Vagina (tissue), 2 donors: ENCODE measurements at regions of chr1 and their contacts with region 1.

Region 1: GRCh38 chr1:204806943-204807687 is 63.5 kb upstream of the NFASC start:
- DNase-seq: no peak
- H3K4me3 ChIP-seq: peak overlapping the region; percentile 26 to 43
- H3K27ac ChIP-seq: no peak overlapping the region
- H3K4me1 ChIP-seq: no peaks in the 10 kb centered on the region
- H3K27me3 ChIP-seq: no peaks in the 10 kb centered on the region
- CTCF ChIP-seq: peak; percentile 87 to 97 (median 95)
- POLR2A ChIP-seq: no peak

Region 2: DNA sequence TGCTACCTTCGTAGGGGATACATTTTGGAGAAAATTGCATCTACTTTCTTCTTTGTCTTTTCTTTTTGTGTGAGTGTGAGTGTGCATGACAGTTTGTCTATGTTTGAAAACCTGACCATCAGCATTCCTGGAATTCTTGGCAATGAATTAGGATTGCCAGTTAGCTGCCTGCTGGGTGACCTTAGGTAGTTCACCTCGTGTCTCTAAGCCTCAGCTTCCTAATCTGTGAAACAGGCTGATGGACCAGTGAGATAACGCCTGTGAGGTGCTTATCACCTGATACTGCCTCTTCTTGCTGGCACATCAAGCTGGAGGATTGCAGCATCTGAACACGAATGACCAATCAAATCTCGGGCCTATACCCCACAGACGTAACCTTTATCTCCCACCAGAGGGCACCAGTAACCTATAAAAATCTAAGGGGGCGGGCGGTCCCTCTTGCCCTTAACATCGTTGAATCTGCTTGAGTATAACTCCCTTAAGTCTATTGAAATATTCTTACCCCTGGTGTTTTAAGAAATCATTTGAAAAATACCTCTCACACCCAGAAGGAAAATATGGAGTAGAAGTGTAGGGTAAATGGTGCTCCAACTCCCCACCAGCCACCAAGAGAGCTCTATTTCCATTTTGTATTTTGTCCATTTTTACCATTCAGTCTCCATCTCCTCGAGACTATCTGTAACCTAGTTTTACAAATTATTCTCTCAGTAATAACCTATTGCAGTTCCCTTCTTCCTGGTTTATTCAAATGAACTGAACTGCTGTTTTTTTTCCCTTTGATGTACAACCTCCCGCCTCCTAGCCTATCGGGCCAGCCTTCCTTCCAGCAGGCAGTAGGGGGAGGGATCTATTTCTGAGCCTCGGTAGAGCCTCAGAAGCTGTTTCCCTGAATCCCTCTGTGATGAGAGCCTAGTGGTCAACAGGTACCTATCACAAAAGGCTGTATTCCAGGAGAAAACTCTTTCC is 241.2 kb before region 1 on chr1:
- intact Hi-C with region 1: loop called (anchors 2 kb)
- DNase-seq: no peak
- H3K4me3 ChIP-seq: no peak overlapping the region
- H3K27ac ChIP-seq: no peak overlapping the region
- H3K4me1 ChIP-seq: no peaks in the 10 kb centered on the region
- H3K27me3 ChIP-seq: no peaks in the 10 kb centered on the region
- CTCF ChIP-seq: peak; percentile 61 to 79 (median 65)
- POLR2A ChIP-seq: no peak

Region 3: DNA sequence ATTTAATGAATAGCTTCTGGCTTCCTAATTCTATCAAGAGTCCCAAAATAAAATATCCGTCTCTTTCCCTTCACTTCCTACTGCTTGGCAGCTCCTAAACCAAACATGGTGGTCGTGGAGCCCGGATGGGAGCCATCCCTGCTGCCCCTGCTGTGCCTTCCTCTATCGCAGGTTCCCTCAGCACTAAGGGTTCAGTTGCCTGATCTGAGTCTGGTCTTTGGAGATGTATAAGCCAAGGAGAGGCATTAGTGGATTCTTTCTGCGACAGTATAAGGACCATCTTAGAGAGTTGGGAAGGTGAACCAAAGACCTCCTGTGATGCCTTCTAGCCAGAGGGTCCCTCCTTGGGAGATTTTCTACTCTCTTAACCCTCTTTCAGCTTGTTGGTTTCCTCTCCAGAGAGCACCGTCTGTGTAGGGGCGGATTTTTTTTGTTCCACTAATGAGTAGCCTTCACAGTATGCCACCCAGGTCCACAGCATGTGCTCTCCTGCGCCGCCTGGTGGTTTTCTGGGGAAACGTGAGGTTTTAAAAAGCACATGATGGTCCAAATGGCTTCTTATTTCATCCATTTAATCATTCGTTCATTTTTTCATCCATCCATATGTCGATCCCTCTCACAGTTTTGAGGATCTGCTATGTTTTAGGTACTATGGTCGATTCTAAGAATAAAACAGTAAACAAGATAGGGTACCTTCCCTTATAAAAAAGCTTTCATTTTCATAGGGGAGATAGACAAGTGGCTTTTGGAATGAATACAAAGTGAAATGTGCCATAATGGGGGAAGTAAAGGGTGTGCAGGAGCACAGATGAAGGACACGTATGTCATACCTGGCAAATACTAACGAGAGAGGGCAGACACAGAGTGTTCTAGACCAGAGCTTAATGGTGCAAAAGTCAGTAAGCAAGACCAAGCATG is 134.6 kb after region 1 on chr1:
- intact Hi-C with region 1: loop called (anchors 5 kb)
- DNase-seq: no peak
- H3K4me3 ChIP-seq: no peak overlapping the region
- H3K27ac ChIP-seq: peak overlapping the region; percentile 2
- H3K4me1 ChIP-seq: no peaks in the 10 kb centered on the region
- H3K27me3 ChIP-seq: no peaks in the 10 kb centered on the region
- CTCF ChIP-seq: peak; percentile 71 to 89 (median 84)
- POLR2A ChIP-seq: no peak

Region 4: DNA sequence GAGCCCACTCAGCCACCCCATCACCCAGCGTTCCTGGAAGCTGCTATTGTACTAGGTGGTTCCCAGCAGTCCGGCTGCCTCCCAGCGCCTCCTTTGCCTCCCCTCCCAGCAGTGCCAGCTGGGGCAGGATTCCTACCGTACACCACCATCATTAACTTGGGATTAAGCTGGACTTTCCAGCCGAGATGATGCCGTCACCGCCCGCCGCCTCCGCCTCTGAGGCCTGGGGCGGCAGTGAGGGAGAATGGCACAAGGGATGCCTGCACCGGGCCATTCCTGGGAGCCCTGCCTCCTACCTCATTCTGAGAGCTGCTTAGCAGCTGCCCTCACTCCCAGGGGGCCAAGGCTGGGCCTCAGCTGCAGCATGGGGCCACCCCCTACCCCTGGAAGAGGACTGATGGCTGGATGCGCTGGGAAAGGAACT is 249.1 kb after region 1 on chr1:
- intact Hi-C with region 1: loop called (anchors 10 kb)
- DNase-seq: no peak
- H3K4me3 ChIP-seq: no peak overlapping the region
- H3K27ac ChIP-seq: no peak overlapping the region
- H3K4me1 ChIP-seq: no peaks in the 10 kb centered on the region
- H3K27me3 ChIP-seq: no peaks in the 10 kb centered on the region
- CTCF ChIP-seq: no peak
- POLR2A ChIP-seq: no peak